CD14-positive monocyte (primary cell): ENCODE measurements at regions of chr9 and their contacts with region 1.

Region 1: DNA sequence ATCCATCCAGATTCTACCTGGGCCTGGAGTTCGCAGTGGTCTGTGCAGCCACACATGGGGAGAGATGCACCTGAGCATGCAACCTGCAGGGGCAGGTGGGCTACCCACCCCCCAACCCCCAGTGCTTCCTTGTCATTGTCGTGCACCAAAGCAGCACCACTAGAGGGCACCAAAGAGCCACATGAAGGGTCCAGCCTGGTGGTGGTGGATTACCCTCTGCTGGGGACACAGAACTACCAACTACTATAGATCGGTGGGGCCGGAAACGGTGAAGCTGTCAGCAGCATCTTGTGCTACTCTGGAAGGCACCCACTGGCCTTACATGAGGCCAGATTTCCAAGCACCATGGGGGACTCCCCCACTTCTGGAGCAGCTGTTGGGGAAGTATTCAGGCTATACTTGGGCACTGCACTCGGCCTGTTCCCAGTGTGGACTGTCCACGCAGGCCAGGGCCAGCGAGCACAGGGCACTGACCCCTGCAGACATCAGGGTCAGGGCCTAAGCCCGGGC is 60.2 kb upstream of the TBC1D2 start:
- DNase-seq: peak; percentile 44 to 66 (median 60)
- H3K4me3 ChIP-seq: no peak overlapping the region
- H3K4me3 Mint-ChIP-seq: no peak overlapping the region
- H3K27ac ChIP-seq: no peak overlapping the region
- H3K27ac Mint-ChIP-seq: no peak overlapping the region
- H3K4me1 ChIP-seq: peaks cover 13 to 19% of the 10 kb centered on the region in 2 donors
- H3K4me1 Mint-ChIP-seq: peaks cover 29% of the 10 kb centered on the region
- H3K27me3 ChIP-seq: no peaks in the 10 kb centered on the region
- H3K27me3 Mint-ChIP-seq: peaks cover 1 to 6% (median 4%) of the 10 kb centered on the region in 3 donors
- CTCF ChIP-seq: peak; percentile 96

Region 2: GRCh38 chr9:98536542-98537173 is 221.1 kb after region 1 on chr9:
- intact Hi-C with region 1: no loop called
- DNase-seq: peak; percentile 19 to 43 (median 37)
- H3K4me3 ChIP-seq: no peak overlapping the region
- H3K4me3 Mint-ChIP-seq: no peak overlapping the region
- H3K27ac ChIP-seq: no peak overlapping the region
- H3K27ac Mint-ChIP-seq: no peak overlapping the region
- H3K4me1 ChIP-seq: no peaks in the 10 kb centered on the region
- H3K4me1 Mint-ChIP-seq: peaks cover 3% of the 10 kb centered on the region
- H3K27me3 ChIP-seq: no peaks in the 10 kb centered on the region
- H3K27me3 Mint-ChIP-seq: peaks cover 6 to 13% (median 8%) of the 10 kb centered on the region in 3 donors
- CTCF ChIP-seq: peak; percentile 68

Region 3: GRCh38 chr9:98775831-98776441 is 460.3 kb after region 1 on chr9:
- intact Hi-C with region 1: loop called (anchors 5 kb)
- DNase-seq: peak; percentile 20 to 59 (median 56)
- H3K4me3 ChIP-seq: no peak overlapping the region
- H3K4me3 Mint-ChIP-seq: no peak overlapping the region
- H3K27ac ChIP-seq: no peak overlapping the region
- H3K27ac Mint-ChIP-seq: no peak overlapping the region
- H3K4me1 ChIP-seq: no peaks in the 10 kb centered on the region
- H3K4me1 Mint-ChIP-seq: no peaks in the 10 kb centered on the region
- H3K27me3 ChIP-seq: no peaks in the 10 kb centered on the region
- H3K27me3 Mint-ChIP-seq: peaks cover 0 to 7% (median 0%) of the 10 kb centered on the region in 3 donors
- CTCF ChIP-seq: peak; percentile 81